Posterior cingulate gyrus (tissue), 11 donors: ENCODE measurements at regions of chr7 and their contacts with region 1.

Region 1: DNA sequence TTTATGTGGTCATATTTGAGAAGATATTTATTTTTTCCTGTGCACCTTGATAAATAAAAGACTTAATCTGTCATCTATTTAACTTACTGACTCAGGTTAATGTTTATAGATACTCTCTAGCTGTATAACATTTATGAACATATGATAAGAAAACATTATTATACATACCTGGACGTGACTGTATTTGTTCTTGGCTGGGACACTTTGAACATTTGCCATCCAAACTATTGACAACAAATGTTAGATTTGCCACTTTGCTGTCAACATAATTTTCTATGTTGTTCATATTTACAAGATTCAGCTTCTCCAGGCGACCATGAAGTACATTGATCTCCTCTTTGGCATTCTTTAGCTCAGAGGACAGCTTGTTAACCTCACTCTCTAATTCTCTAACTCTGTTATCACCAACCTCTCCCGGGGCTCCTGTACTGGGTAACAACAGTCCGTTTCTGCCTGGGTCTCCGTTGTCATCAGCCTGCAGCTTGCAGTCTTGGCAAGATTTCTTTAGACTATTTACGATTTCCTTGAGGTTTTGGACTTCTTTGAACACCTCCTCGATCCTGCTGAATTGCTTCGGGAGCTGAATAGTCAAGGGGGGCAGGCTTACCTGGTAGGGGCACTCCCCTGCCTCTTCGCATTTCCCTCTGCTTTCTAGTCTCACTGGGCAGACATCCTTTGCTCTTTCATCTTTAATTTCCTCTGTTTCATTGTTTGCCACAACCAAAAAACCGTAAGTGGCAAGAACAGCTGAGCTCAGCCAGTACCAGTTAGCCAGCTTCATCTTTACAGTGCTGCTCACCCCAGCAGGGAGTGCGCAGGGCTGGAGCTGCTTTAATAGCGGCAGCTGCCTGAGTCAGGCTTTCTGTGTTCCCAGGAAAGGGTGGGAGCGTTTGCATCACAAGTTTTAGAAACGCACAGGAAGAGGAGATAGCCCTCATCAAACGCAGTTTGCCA is at the start of gene FGL2:
- DNase-seq: peak; percentile 31 to 91 (median 54)

Region 2: DNA sequence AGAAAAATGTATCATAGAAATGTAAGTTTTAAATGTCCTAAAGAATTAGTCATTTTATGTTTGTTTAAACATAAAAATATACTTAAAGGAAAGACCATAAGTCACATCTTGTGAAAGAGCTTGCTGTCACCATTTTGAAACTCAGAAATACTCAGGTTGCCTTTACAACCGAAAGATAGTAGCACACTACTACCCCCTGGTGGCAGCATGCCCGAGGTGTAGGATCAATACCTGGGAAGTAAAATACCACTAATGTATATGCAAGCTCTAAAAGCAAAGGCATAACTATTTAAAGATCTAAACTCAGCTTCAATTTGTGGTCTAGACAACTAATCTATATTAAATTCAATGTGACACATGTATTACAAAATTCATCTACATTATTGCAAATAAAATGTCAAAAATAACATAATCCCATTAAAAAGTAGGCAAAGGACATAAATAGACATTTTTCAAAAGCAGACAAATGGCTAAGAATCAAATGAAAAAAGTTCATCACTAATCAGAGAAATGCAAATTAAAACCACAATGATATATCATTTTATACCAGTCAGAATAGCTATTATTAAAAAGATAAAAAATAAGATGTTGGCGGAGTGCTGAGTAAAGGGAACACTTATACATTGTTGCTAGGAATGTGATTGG is 48.0 kb after region 1 on chr7:
- intact Hi-C with region 1: loop called (anchors 10 kb)
- DNase-seq: peak in 8 of 10 donors; percentile 31 to 90 (median 63)